Activated B cell treated with CpG ODN at 0.5 μM for 24 hours (primary cell): ENCODE measurements at regions of chr19 and their contacts with region 1.

Region 1: GRCh38 chr19:27793644-27794493 is 1419.1 kb downstream of the UQCRFS1 start:
- DNase-seq: peak; percentile 83
- ATAC-seq: peak; percentile 89
- H3K4me3 Mint-ChIP-seq: peak overlapping the region; percentile 95
- H3K27ac Mint-ChIP-seq: peak overlapping the region; percentile 93
- H3K4me1 Mint-ChIP-seq: peaks cover 35% of the 10 kb centered on the region
- H3K27me3 Mint-ChIP-seq: no peaks in the 10 kb centered on the region
- CTCF ChIP-seq: no peak

Region 2: GRCh38 chr19:27774827-27775226 is 19.0 kb before region 1 on chr19:
- CTCF ChIA-PET with region 1: interaction called, 3 read pairs
- POLR2A ChIA-PET with region 1: interaction called, 13 read pairs
- intact Hi-C with region 1: loop called (anchors 1 kb)
- DNase-seq: no peak
- ATAC-seq: peak; percentile 31
- H3K4me3 Mint-ChIP-seq: no peak overlapping the region
- H3K27ac Mint-ChIP-seq: no peak overlapping the region
- H3K4me1 Mint-ChIP-seq: peaks cover 6% of the 10 kb centered on the region
- H3K27me3 Mint-ChIP-seq: no peaks in the 10 kb centered on the region
- CTCF ChIP-seq: no peak

Region 3: GRCh38 chr19:27779954-27780353 is 13.9 kb before region 1 on chr19:
- CTCF ChIA-PET with region 1: interaction called, 3 read pairs
- POLR2A ChIA-PET with region 1: interaction called, 13 read pairs
- intact Hi-C with region 1: loop called (anchors 1 kb)
- DNase-seq: no peak
- ATAC-seq: peak; percentile 86
- H3K4me3 Mint-ChIP-seq: peak overlapping the region; percentile 58
- H3K27ac Mint-ChIP-seq: peak overlapping the region; percentile 93
- H3K4me1 Mint-ChIP-seq: peaks cover 21% of the 10 kb centered on the region
- H3K27me3 Mint-ChIP-seq: no peaks in the 10 kb centered on the region
- CTCF ChIP-seq: no peak

Region 4: DNA sequence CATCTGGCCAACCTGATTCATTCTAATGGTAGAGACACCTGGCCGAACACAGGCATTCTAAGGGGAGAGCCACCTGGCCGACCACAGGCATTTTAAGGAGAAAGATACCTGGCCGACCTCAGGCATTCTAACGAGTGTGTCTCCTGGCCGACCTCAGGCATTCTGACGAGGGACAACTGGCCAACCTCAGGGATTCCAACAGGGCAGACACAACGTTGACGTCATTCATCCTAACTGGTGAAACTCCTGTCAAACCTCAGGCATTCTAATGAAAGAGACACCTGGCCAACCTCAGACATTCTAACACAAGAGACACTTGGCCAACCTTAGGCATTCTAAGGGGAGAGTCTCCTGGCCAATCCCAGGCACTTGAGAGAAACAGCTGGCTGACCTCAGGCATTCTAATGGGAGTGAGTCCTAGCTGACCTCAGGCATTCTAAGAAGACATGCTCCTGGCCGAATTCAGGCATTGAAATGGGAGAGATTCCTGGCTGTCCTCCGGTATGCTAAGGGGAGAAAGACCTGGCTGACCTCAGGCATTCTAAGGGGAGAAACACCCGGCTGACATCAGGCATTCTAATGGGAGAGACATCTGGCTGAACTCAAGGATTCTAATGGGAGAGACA is 66.6 kb after region 1 on chr19:
- CTCF ChIA-PET with region 1: no interaction called
- POLR2A ChIA-PET with region 1: no interaction called
- intact Hi-C with region 1: no loop called
- DNase-seq: no peak
- ATAC-seq: no peak
- H3K4me3 Mint-ChIP-seq: no peak overlapping the region
- H3K27ac Mint-ChIP-seq: no peak overlapping the region
- H3K4me1 Mint-ChIP-seq: no peaks in the 10 kb centered on the region
- H3K27me3 Mint-ChIP-seq: no peaks in the 10 kb centered on the region
- CTCF ChIP-seq: no peak

Region 5: DNA sequence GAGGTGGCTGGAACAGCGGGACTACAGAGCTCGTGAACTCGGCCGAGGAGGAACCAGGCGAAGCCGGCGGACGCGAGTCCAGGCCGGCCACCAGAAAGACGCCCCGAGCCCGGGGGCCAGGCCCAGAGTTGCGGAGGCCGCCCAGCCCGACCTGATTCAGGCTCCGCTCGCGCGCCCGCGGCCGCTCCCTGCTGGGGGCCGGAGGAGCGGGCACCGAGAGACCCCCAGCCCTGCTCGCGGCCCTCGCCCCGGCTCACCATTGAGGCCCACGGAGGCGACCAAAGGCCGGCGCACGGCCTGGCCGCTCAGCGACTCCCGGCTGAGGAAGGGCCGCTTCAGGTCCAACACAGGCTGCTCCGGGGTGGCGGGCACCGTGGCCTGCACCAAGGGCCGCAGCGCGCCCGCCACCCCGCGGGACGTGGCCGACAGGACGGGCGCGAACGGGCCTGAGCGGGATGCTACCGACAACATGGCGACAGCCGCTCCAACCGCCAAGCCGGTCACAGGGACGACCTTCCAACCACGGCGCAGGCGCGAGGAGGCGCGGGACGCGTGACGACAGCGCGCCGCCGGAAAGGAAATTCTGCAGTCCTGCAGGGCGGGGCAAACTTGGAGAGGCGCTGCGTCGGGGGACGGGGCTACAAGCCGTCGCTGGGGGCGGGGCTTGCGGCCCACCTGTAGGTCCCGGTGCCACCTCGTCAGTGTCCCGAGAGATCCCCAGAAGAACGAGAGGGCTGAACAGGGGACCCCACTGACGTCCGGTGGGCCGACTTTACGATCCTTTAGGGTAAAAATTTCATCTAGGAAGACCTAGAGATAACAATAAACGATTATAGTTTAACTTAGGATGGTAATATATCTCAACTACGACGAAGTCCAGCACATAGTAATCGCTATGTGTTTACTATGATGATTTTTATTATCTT is 1419.0 kb after region 1 on chr19 and contains the start of gene UQCRFS1:
- CTCF ChIA-PET with region 1: no interaction called
- POLR2A ChIA-PET with region 1: no interaction called
- intact Hi-C with region 1: loop called (anchors 2 kb)
- DNase-seq: peak; percentile 92
- ATAC-seq: peak; percentile 96
- H3K4me3 Mint-ChIP-seq: peak within 1 kb of the TSS; percentile 92
- H3K27ac Mint-ChIP-seq: peak within 1 kb of the TSS; percentile 88
- H3K4me1 Mint-ChIP-seq: peaks cover 38% of the 10 kb centered on the region
- H3K27me3 Mint-ChIP-seq: peaks cover 9% of the 10 kb centered on the region
- CTCF ChIP-seq: no peak
- total RNA-seq, gene UQCRFS1: 22.9 and 24.4 TPM in 2 replicates